Cardiac septum (tissue), 1 donor: ENCODE measurements at regions of chr14 and their contacts with region 1.

Region 1: GRCh38 chr14:35046048-35046741 is at the start of gene FAM177A1:
- DNase-seq: peak; percentile 99
- total RNA-seq, gene FAM177A1: 156 TPM

Region 2: GRCh38 chr14:34875031-34875922 is 170.9 kb before region 1 on chr14 and contains the start of gene BAZ1A:
- intact Hi-C with region 1: loop called (anchors 5 kb)
- DNase-seq: peak; percentile 84
- total RNA-seq, gene BAZ1A: 8.4 TPM

Region 3: DNA sequence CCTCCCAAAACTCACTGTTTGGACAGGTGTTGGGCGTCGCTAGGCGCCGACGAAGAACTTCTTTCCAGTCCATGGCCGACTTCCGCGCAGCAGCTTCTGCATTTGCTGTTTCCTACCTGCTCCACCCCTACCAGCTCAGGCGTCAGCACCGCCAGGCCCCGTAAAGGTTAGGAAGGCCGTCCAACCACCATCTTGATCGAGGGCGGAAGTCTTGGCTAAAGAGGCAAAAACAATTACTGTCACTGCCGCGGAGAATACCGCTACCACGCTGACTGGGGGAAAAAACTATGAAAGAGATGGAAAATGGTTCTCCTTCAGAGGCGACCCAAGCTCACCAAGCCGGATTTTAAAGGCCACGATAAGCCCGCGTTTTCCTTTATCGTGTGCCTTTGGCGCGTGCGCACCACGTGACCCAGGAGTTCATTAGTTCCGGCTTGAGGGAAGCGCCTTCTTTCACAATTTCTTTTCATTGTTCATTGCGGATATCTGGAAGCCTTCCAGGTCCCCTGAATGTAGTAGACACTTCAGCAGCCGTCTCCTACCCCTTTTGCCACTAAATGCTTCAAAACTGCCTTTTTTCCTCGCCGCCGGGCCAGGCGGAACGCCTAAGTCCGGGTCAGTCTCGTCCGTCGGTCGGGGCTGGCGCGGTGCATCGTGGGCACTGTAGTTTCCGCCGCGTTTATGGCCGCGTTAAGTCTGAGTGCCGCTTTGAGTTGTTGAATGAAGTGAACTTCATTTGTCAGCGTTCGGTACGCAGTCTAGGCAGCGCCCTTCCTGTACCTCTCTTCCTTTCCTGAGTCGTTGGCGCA is 75.9 kb after region 1 on chr14 and contains the starts of genes PPP2R3C and PRORP:
- intact Hi-C with region 1: loop called (anchors 5 kb)
- DNase-seq: peak; percentile 96
- total RNA-seq, gene PPP2R3C: 26.1 TPM
- total RNA-seq, gene PRORP: 19.6 TPM

Region 4: GRCh38 chr14:35196571-35196970 is 150.4 kb after region 1 on chr14:
- intact Hi-C with region 1: no loop called
- DNase-seq: no peak

Region 5: DNA sequence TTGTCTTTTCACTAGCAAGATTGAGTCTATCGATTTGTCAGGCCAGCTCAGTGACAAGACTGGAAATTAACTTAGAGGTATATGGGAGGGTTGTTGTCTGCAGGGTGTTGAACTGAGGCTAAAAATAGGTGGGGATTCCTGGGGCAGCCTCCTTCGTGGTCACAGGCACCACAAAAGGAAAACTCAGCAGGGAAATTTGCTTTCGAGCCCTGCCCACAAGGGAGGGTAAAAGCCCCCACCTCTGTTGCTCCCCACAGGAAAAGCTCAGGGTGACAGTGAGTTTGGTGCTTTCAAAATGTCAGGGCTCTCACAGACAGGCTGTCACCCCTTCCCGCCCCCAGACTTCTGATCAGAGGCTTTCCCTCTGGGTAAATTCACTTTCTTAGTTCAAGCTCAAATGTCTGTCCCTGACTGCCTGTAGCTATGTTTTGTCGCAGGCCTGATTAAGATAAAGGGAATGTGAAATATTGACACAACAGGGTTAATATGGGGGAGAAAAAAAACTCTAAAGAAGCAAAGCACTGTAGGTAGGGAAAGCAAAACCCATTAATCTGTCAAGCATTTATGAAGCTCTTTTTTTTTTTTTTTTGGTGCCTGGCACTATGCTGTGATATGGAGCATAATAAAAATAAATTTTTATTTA is 370.0 kb after region 1 on chr14:
- intact Hi-C with region 1: loop called (anchors 10 kb)
- DNase-seq: no peak